ENCODE measurements at regions of chr13 and their contacts with region 1.

Region 1: DNA sequence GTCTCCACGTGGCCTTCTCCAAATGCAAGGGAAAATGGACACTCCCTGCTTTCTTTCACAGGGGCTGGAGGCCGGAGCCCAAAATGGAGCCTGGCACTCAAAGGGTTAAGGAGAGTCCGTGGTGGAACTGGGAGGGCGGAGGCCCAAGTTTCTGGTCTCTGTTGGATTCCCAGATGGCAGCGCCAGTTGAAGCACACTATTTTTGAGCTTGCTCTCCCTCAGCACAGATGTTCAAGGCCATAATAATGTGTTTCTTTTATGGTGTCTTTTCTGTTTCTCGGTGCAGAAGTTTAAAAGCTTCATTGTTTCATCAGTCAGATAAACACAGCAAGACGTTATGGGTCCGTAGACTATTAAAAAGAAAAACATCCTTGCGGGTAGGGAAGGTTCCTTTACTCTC is 67.6 kb downstream of the TNFRSF19 start:
- DNase-seq: peak; percentile 31 to 34
- ATAC-seq: peak in 7 of 8 donors; percentile 21 to 71 (median 54)
- H3K4me3 ChIP-seq: no peak overlapping the region
- H3K27ac ChIP-seq: peak overlapping the region in 6 of 10 donors; percentile 14 to 64 (median 34)
- H3K4me1 ChIP-seq: peaks cover 0 to 52% (median 31%) of the 10 kb centered on the region in 9 donors
- H3K27me3 ChIP-seq: no peaks in the 10 kb centered on the region
- CTCF ChIP-seq: no peak

Region 2: GRCh38 chr13:23598369-23598768 is 39.5 kb before region 1 on chr13:
- intact Hi-C with region 1: no loop called
- DNase-seq: no peak
- ATAC-seq: no peak
- H3K4me3 ChIP-seq: no peak overlapping the region
- H3K27ac ChIP-seq: no peak overlapping the region
- H3K4me1 ChIP-seq: peaks cover 0 to 6% (median 0%) of the 10 kb centered on the region in 9 donors
- H3K27me3 ChIP-seq: no peaks in the 10 kb centered on the region
- CTCF ChIP-seq: no peak

Region 3: GRCh38 chr13:23707674-23708073 is 69.8 kb after region 1 on chr13:
- intact Hi-C with region 1: loop called in 1 of 10 experiments (anchors 10 kb)
- DNase-seq: no peak
- ATAC-seq: no peak
- H3K4me3 ChIP-seq: no peak overlapping the region
- H3K27ac ChIP-seq: no peak overlapping the region
- H3K4me1 ChIP-seq: peaks cover 0 to 25% (median 13%) of the 10 kb centered on the region in 9 donors
- H3K27me3 ChIP-seq: no peaks in the 10 kb centered on the region
- CTCF ChIP-seq: peak in 6 of 9 donors; percentile 23 to 40 (median 33)

Measured in heart right ventricle (tissue), 16 donors.